ENCODE measurements at regions of chr1 and their contacts with region 1.

Region 1: GRCh38 chr1:13487143-13487868 is 26.5 kb downstream of the LRRC38 start:
- DNase-seq: peak; percentile 78
- ATAC-seq: peak; percentile 83

Region 2: GRCh38 chr1:13528320-13528719 is 41.0 kb after region 1 on chr1:
- intact Hi-C with region 1: loop called (anchors 5 kb)
- DNase-seq: no peak
- ATAC-seq: peak; percentile 65

Region 3: GRCh38 chr1:13732971-13733667 is 245.8 kb after region 1 on chr1:
- intact Hi-C with region 1: no loop called
- DNase-seq: no peak
- ATAC-seq: no peak